T-cell (primary cell): ENCODE measurements at regions of chr14 and their contacts with region 1.

Region 1: DNA sequence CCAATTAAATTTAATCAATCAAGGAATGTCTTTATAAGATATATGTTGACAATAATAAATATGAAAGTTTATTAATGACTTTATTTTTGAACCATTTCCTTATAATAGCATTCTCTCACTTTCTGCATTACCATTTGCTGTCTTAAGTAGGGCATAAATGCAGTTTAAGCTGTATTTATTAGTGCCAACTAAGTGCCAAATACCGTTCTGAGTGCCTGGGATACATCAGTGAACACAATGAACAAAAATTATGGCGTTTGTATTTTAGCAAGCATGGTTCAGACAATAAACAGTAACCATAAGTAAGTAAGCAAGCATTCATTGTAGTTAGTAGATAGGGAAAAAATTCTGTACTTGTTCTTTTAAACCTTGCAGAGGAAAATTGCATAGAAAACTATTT is 145.8 kb downstream of the FUT8 start:
- DNase-seq: no peak
- ATAC-seq: no peak
- H3K4me3 ChIP-seq: no peak overlapping the region
- H3K4me3 Mint-ChIP-seq: no peak overlapping the region
- H3K27ac ChIP-seq: no peak overlapping the region
- H3K27ac Mint-ChIP-seq: no peak overlapping the region
- H3K4me1 ChIP-seq: no peaks in the 10 kb centered on the region
- H3K4me1 Mint-ChIP-seq: peaks cover 14 to 27% (median 26%) of the 10 kb centered on the region in 3 donors
- H3K27me3 ChIP-seq: no peaks in the 10 kb centered on the region
- H3K27me3 Mint-ChIP-seq: no peaks in the 10 kb centered on the region

Region 2: GRCh38 chr14:64764641-64765520 is 793.5 kb before region 1 on chr14:
- CTCF ChIA-PET with region 1: no interaction called
- POLR2A ChIA-PET with region 1: no interaction called
- DNase-seq: peak; percentile 8 to 84 (median 54)
- ATAC-seq: peak; percentile 67 to 84 (median 76)
- H3K4me3 ChIP-seq: peak overlapping the region; percentile 16 to 58
- H3K4me3 Mint-ChIP-seq: peak overlapping the region; percentile 34 to 59 (median 56)
- H3K27ac ChIP-seq: no peak overlapping the region
- H3K27ac Mint-ChIP-seq: no peak overlapping the region
- H3K4me1 ChIP-seq: peaks cover 0 to 49% of the 10 kb centered on the region in 2 experiments
- H3K4me1 Mint-ChIP-seq: peaks cover 34 to 55% (median 43%) of the 10 kb centered on the region in 3 donors
- H3K27me3 ChIP-seq: peaks cover 0 to 20% of the 10 kb centered on the region in 2 experiments
- H3K27me3 Mint-ChIP-seq: peaks cover 0 to 3% of the 10 kb centered on the region in 2 donors

Region 3: GRCh38 chr14:65639216-65639615 is 80.9 kb after region 1 on chr14:
- CTCF ChIA-PET with region 1: no interaction called
- POLR2A ChIA-PET with region 1: interaction called in 1 of 2 experiments, 10 read pairs
- DNase-seq: no peak
- ATAC-seq: no peak
- H3K4me3 ChIP-seq: no peak overlapping the region
- H3K4me3 Mint-ChIP-seq: no peak overlapping the region
- H3K27ac ChIP-seq: no peak overlapping the region
- H3K27ac Mint-ChIP-seq: no peak overlapping the region
- H3K4me1 ChIP-seq: peaks cover 2 to 8% of the 10 kb centered on the region in 2 experiments
- H3K4me1 Mint-ChIP-seq: peaks cover 29 to 45% (median 43%) of the 10 kb centered on the region in 3 donors
- H3K27me3 ChIP-seq: no peaks in the 10 kb centered on the region
- H3K27me3 Mint-ChIP-seq: no peaks in the 10 kb centered on the region